ENCODE measurements at regions of chr10 and their contacts with region 1.

Region 1: GRCh38 chr10:98886686-98887085 is 349.0 kb downstream of the HPSE2 start:
- H3K4me3 Mint-ChIP-seq: peak overlapping the region; percentile 60
- H3K27ac Mint-ChIP-seq: peak overlapping the region; percentile 77
- H3K4me1 Mint-ChIP-seq: peaks cover 19% of the 10 kb centered on the region
- H3K27me3 Mint-ChIP-seq: peaks cover 5% of the 10 kb centered on the region

Region 2: DNA sequence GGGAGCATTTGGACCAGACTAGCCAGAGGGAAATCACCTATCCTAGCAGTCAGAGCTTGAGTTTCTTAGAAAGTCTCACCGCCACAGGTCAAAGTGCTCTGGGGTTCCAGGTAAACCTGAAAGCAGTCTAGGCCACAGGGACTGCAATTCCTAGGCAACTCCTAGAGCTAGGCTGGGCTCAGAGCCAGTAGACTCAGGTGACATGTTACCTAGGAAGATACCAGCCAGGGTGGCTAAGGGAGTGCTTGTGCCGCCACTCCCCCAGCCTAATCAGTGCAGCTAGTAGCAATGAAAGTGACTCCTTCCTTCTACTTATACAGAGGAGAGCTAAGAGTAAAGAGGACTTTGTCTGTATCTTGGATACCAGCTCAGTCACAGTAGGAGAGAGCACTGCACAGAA is 91.2 kb before region 1 on chr10:
- intact Hi-C with region 1: no loop called
- H3K4me3 Mint-ChIP-seq: no peak overlapping the region
- H3K27ac Mint-ChIP-seq: no peak overlapping the region
- H3K4me1 Mint-ChIP-seq: no peaks in the 10 kb centered on the region
- H3K27me3 Mint-ChIP-seq: peaks cover 5% of the 10 kb centered on the region

Region 3: GRCh38 chr10:99007466-99007865 is 120.8 kb after region 1 on chr10:
- intact Hi-C with region 1: no loop called
- H3K4me3 Mint-ChIP-seq: no peak overlapping the region
- H3K27ac Mint-ChIP-seq: no peak overlapping the region
- H3K4me1 Mint-ChIP-seq: no peaks in the 10 kb centered on the region
- H3K27me3 Mint-ChIP-seq: no peaks in the 10 kb centered on the region

Region 4: DNA sequence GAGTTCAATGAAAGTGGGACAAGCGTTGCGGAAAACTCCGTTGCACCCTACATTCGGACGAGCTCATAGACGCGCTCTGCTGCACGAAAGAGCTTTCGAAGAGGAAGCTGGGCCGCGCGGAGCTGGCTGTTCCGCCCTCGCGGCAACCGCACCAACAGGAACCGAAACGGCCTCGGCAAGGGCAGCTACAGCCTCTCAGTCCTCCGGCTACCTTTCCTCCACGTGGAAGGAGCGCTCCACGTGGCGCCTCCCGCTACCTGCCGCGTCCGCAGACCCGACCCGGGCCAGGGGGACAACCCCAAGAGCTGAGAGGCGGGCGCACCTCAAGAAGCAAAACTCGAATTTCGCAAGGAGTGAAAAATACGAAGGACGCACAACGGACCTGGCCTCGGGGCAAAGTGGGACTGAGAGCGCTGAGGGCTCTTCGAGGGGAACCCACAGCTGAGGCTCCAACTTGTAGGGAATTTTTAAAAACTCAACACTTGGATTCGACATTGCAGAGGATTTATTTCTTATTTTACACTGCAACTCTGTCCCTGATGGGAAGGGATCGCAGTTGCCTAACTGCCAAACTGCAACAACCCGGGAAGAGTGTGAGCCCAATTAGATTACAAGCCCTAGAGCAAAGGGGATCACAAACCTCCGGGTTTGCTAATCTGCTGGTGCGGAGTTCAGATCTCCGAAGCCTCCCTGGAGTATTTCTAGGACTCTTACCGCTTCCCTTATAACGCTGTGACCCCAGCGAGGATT is 347.5 kb after region 1 on chr10:
- intact Hi-C with region 1: loop called (anchors 5 kb)
- H3K4me3 Mint-ChIP-seq: peak overlapping the region; percentile 73
- H3K27ac Mint-ChIP-seq: peak overlapping the region; percentile 71
- H3K4me1 Mint-ChIP-seq: peaks cover 52% of the 10 kb centered on the region
- H3K27me3 Mint-ChIP-seq: peaks cover 90% of the 10 kb centered on the region

Measured in dendritic cell treated with granulocyte-macrophage colony-stimulating factor and Interleukin-4, amounts not matched to agents 40 ng/mL and 50 ng/mL, for 4 days (primary cell).